ENCODE measurements at regions of chr12 and their contacts with region 1.

Region 1: DNA sequence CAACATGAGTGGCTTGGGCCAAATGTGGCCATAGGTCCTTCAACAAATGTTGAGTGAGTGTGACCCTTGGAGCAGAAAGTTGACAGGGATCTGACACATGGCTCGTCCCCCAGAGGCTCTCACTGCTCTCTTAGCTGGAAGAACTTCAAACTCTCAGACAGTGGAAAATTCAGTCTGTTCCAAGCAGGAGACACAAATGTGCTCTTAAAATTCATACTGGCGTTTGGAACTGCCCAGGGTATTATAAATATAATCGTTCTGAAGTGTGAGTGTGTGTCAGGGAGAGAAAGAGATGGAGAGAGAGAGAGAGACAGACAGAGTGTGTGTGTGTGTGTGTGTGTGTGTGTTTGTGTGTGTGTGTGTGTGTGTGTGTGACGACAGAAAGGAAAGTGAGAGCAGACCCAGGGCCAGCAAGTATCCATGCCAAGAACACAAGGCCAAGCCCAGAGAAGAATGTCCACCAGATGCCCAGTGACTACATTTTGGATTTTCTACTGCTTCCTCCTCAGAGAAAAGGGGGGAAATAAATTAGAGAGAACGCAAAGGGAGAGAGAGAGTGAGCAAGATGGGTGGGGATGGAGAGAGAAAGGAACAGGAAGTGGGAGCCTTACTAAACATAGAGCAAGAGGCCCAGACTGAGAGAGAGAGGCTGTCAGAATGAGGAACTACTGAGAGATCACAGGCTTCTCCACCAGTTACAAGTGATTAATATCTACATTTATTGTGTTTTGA is 193.6 kb upstream of the NUDT4 start:
- DNase-seq: peak; percentile 25
- H3K4me3 Mint-ChIP-seq: no peak overlapping the region
- H3K27ac Mint-ChIP-seq: peak overlapping the region; percentile 63
- H3K4me1 Mint-ChIP-seq: peaks cover 27% of the 10 kb centered on the region
- H3K27me3 Mint-ChIP-seq: no peaks in the 10 kb centered on the region

Region 2: GRCh38 chr12:93167841-93168492 is 16.1 kb before region 1 on chr12:
- CTCF ChIA-PET with region 1: no interaction called
- intact Hi-C with region 1: loop called (anchors 1 kb)
- DNase-seq: peak; percentile 85
- H3K4me3 Mint-ChIP-seq: peak overlapping the region; percentile 49
- H3K27ac Mint-ChIP-seq: peak overlapping the region; percentile 67
- H3K4me1 Mint-ChIP-seq: peaks cover 17% of the 10 kb centered on the region
- H3K27me3 Mint-ChIP-seq: peaks cover 7% of the 10 kb centered on the region